PC-3 (cell line): ENCODE measurements at regions of chr5 and their contacts with region 1.

Region 1: DNA sequence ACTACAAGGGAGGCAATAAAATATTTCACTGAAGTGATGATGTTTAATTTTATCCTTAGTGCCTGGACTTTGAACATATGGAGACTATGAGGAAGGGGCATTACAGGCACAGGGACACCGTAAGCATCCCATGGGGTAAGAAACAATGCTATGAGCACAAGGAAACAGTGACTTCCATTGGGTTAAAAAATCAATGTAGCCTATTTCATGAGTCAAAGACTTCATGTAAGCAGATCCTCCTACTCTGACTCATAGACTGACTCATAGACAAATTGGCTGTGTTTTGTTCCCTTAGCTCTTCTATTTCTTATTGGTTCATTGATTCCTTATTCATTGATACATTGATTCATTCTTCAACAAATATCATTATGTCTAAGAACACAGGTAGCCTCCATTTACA is 351.0 kb downstream of the PRELID2 start:
- DNase-seq: peak; percentile 67
- ATAC-seq: peak; percentile 81
- H3K4me3 ChIP-seq: no peak overlapping the region
- H3K27ac ChIP-seq: no peak overlapping the region
- H3K4me1 ChIP-seq: peaks cover 28% of the 10 kb centered on the region
- H3K27me3 ChIP-seq: no peaks in the 10 kb centered on the region
- CTCF ChIP-seq: no peak

Region 2: DNA sequence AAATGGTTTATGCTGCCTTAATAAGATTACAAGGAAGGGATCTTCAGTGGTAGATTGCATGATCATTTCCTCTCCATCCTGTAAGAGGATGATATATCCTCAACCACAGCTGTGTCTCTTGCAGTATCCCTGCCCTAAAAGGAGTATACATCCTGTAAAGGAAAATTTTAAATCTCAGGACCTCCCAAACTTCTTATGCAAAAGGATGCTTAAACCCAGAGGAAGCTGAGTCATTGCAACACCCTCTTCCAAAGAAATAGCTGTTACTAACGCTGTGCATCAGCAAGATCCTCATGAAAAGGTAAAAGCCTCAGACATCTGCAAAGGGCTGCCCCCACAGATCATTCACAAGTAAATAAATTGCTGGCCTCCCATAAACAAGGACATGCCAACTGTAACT is 248.0 kb before region 1 on chr5:
- CTCF ChIA-PET with region 1: no interaction called
- POLR2A ChIA-PET with region 1: no interaction called
- intact Hi-C with region 1: no loop called
- DNase-seq: no peak
- ATAC-seq: no peak
- H3K4me3 ChIP-seq: no peak overlapping the region
- H3K27ac ChIP-seq: no peak overlapping the region
- H3K4me1 ChIP-seq: no peaks in the 10 kb centered on the region
- H3K27me3 ChIP-seq: no peaks in the 10 kb centered on the region
- CTCF ChIP-seq: no peak

Region 3: DNA sequence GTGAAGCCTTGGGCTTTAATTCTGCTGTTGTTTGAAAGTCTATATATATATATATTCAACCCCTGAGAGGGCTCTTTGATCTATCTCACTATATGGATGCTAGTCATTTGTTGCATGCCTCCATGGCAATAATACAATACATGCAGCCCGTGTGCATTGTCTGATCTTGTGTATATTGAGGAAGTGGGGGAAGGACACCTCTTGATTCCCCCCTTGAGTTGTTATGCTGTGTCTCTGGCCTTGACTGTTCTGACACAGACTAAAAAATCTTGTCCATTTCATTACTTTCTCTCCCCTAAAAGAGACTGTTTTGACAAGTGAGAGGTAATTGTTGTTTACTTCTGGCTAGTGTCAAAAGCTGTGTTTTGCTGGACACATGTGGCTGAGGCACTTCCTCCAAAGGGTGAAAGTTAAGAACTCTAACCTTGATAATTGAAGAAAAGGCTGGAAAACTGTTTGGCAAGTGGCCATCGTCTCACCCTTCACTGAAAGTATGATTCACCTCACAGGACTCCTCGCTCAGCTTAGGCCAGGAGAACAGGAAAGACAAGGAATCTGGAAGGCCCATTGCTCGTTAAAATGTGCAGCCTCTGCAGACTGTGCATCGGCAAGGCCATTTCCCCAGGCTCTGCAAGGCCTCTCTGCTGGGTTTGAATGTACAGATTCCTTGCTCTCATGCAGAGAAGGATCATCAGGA is 47.0 kb after region 1 on chr5:
- CTCF ChIA-PET with region 1: no interaction called
- POLR2A ChIA-PET with region 1: no interaction called
- intact Hi-C with region 1: loop called (anchors 5 kb)
- DNase-seq: peak; percentile 92
- ATAC-seq: peak; percentile 100
- H3K4me3 ChIP-seq: no peak overlapping the region
- H3K27ac ChIP-seq: peak overlapping the region; percentile 44
- H3K4me1 ChIP-seq: peaks cover 19% of the 10 kb centered on the region
- H3K27me3 ChIP-seq: no peaks in the 10 kb centered on the region
- CTCF ChIP-seq: no peak

Region 4: GRCh38 chr5:145775893-145776444 is 291.8 kb after region 1 on chr5:
- CTCF ChIA-PET with region 1: no interaction called
- POLR2A ChIA-PET with region 1: no interaction called
- intact Hi-C with region 1: no loop called
- DNase-seq: peak; percentile 77
- ATAC-seq: peak; percentile 100
- H3K4me3 ChIP-seq: no peak overlapping the region
- H3K27ac ChIP-seq: peak overlapping the region; percentile 24; the same call in 1 of the 2 replicates
- H3K4me1 ChIP-seq: peaks cover 12% of the 10 kb centered on the region
- H3K27me3 ChIP-seq: no peaks in the 10 kb centered on the region
- CTCF ChIP-seq: no peak